Ascending aorta (tissue), 2 donors: ENCODE measurements at regions of chr2 and their contacts with region 1.

Region 1: DNA sequence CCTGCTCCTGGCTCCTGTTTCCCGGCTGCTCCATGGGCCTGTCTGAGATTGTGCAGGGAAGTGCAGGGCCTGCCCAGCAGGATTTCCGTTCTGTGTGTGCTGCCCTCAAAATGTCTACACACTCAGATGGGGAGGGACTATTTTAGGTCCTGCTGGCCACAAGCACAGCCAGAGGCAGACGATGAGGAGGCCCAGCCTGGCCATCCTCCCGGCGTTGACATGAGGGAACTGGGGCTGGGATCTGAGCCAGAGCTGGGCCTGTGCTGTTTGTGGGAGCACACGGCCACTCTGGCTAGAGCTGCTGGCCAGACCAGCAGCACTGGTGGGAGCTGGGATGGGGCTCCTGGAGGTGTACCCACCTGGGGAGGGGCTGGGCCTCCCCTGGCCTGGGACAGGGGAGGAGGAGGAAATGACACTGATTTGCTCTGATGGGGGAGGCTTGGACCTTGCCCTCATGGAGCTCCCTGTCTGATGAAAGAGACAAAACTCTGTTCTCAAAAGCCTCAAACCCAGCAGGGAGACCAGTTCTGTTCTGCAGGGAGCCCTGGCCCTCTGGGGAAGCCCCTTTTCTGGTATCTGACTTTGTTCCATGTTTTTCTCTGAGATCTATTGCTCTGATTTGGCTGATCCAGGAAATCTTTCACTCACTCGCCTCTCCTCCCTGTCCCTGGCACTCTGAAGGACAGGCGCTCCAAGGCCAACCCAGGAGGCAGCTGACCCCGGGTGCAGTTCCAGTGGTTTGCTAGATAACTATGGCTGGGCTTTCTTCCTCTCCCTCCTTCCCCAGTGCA is 161.8 kb downstream of the DYSF start:
- DNase-seq: peak; percentile 46 to 89
- H3K4me3 ChIP-seq: no peak overlapping the region
- H3K27ac ChIP-seq: peak overlapping the region; percentile 84 to 87
- H3K4me1 ChIP-seq: peaks cover 0 to 27% of the 10 kb centered on the region in 2 donors
- H3K27me3 ChIP-seq: no peaks in the 10 kb centered on the region
- CTCF ChIP-seq: no peak

Region 2: GRCh38 chr2:71882949-71883472 is 267.8 kb after region 1 on chr2:
- intact Hi-C with region 1: loop called (anchors 5 kb)
- DNase-seq: peak in 1 of 2 donors; percentile 84
- H3K4me3 ChIP-seq: no peak overlapping the region
- H3K27ac ChIP-seq: no peak overlapping the region
- H3K4me1 ChIP-seq: peaks cover 21 to 40% of the 10 kb centered on the region in 2 donors
- H3K27me3 ChIP-seq: no peaks in the 10 kb centered on the region
- CTCF ChIP-seq: no peak